Dendritic cell treated with granulocyte-macrophage colony-stimulating factor and Interleukin-4, amounts not matched to agents 40 ng/mL and 50 ng/mL, for 4 days (primary cell): ENCODE measurements at regions of chr9 and their contacts with region 1.

Region 1: DNA sequence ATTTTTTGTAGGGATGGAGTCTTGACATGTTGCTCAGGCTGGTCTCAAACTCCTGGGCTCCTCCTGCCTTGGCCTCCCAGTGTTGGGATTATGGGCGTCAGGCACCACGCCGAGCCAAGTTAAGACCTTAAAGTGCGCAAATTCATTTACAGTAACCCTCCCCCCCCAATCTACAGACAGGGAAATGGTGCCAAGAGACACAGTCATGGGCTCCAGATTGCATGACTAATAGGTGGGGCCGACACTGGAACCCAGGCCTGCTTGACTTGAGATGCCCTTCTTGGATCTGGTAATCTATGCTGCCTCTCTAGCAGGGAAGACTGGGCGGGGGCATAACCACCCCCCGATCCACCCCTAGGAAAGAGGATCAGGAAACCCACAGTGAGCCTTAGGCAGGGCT is 19.5 kb downstream of the TTF1 start:
- H3K4me3 Mint-ChIP-seq: no peak overlapping the region
- H3K27ac Mint-ChIP-seq: no peak overlapping the region
- H3K4me1 Mint-ChIP-seq: peaks cover 18% of the 10 kb centered on the region
- H3K27me3 Mint-ChIP-seq: no peaks in the 10 kb centered on the region

Region 2: DNA sequence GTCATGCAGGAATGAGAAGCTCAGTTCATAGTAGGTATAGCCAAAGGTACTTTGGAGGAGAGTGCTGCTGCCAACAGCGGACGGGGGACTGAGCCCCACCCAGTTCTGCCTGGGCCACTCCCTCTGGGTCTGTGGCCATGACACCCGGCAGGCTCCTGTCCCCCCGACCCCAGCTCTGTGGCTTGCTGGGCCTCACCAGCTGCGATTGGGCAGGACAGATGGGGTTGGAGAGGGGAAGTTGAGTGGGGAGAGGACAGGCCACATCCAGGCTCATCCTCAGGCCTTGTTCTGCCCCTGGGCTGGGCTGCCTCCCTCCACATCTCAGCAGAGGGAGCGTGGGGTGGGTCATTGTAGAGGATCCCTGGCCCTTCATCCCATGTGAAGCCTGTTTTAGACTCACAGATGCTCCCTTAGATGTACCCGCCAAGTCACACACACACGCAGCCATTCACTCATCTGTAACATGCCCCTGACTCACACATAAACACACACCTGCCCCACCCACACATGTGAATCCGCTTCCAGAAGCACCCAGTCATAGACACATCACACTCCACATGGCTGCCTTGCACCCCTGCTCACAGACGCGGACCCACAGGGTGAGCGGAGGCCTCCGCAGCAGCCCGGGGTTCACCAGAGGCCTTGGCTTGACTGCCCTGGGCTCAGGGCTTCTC is 176.5 kb before region 1 on chr9:
- intact Hi-C with region 1: no loop called
- H3K4me3 Mint-ChIP-seq: no peak overlapping the region
- H3K27ac Mint-ChIP-seq: no peak overlapping the region
- H3K4me1 Mint-ChIP-seq: peaks cover 6% of the 10 kb centered on the region
- H3K27me3 Mint-ChIP-seq: peaks cover 11% of the 10 kb centered on the region

Region 3: GRCh38 chr9:132327537-132327936 is 59.6 kb before region 1 on chr9:
- intact Hi-C with region 1: no loop called
- H3K4me3 Mint-ChIP-seq: no peak overlapping the region
- H3K27ac Mint-ChIP-seq: no peak overlapping the region
- H3K4me1 Mint-ChIP-seq: no peaks in the 10 kb centered on the region
- H3K27me3 Mint-ChIP-seq: no peaks in the 10 kb centered on the region

Region 4: DNA sequence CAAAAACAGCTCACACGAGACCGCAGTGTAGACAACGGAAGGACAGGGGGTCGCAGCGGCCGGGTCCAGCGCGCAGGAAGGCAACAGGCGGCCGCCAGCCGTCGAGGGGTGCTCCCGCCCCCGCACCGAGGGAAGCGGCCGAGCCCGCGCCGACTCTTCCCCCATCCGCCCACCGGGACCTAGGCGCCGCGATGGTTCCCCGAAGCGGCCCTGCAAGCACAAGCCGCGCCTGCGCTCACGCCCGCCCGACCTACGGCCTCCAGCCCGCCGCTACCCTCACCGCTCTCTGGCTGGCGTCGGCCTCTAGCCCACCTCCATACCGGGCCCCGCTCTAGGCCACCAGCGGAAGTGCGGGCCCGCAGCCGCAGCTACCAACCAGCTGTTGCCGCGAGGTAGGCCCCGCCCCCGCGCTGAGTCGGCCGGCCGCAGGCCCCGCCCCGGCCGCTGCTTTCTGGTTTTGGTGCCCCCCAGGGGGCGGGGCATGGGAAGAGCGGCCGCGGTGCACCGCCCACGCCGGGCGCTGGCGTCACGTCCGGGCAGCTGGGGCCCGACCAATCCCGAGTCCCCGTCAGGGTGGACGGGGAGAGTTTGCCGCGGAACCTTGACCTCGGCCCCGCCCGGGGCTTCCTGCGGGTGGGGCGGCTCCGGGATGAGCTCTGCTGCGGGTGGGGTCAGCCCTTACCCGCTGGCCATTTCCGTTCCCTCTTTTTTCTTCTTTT is 32.3 kb before region 1 on chr9 and contains the start of gene SETX:
- intact Hi-C with region 1: loop called (anchors 5 kb)
- H3K4me3 Mint-ChIP-seq: peak within 1 kb of the TSS; percentile 92
- H3K27ac Mint-ChIP-seq: peak within 1 kb of the TSS; percentile 98
- H3K4me1 Mint-ChIP-seq: peaks cover 45% of the 10 kb centered on the region
- H3K27me3 Mint-ChIP-seq: no peaks in the 10 kb centered on the region

Region 5: GRCh38 chr9:134217832-134218629 is 1830.9 kb after region 1 on chr9:
- intact Hi-C with region 1: no loop called
- H3K4me3 Mint-ChIP-seq: no peak overlapping the region
- H3K27ac Mint-ChIP-seq: no peak overlapping the region
- H3K4me1 Mint-ChIP-seq: peaks cover 23% of the 10 kb centered on the region
- H3K27me3 Mint-ChIP-seq: peaks cover 12% of the 10 kb centered on the region